Left ventricle myocardium inferior (tissue), 1 donor: ENCODE measurements at regions of chr3 and their contacts with region 1.

Region 1: DNA sequence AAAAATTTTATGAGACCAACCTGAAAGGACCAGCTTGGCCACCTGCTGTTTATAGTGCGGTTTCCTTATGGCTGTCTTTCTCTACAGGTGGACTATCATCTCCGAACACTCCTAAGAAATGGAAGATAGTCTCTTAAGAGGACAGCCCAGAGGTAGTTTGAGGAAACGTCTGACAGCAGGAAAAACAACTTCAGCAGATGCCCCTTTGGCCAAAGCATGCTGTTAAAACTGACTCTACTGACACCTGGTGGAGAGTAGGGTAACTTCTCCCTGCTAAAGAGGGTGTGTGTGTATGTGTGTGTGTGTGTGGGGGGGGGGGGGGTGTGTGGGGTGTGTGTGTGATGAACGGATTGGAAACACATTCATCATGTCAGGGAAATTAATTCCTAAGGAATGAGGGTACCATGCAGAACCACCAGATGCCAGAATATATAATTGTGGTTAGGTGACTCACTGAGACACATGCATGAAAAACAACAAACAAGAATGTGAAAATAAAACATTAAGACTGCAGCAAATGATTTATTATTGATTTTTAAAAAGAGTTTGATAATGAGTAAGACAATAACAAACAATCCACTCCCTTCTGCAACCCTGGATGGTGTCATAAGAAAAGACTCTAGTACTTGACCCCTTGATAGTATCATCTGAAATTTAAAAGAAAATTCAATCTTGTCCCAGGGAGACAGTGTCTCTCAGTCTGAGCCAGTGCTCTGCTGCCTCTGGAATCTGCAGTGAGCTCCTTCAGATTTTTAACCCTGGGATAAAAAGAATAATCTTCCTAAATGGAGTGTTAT is 256.5 kb downstream of the THRB start:
- DNase-seq: no peak
- H3K4me3 ChIP-seq: no peak overlapping the region
- H3K27ac ChIP-seq: no peak overlapping the region
- H3K4me1 ChIP-seq: peaks cover 28% of the 10 kb centered on the region
- H3K27me3 ChIP-seq: no peaks in the 10 kb centered on the region
- CTCF ChIP-seq: peak; percentile 64

Region 2: DNA sequence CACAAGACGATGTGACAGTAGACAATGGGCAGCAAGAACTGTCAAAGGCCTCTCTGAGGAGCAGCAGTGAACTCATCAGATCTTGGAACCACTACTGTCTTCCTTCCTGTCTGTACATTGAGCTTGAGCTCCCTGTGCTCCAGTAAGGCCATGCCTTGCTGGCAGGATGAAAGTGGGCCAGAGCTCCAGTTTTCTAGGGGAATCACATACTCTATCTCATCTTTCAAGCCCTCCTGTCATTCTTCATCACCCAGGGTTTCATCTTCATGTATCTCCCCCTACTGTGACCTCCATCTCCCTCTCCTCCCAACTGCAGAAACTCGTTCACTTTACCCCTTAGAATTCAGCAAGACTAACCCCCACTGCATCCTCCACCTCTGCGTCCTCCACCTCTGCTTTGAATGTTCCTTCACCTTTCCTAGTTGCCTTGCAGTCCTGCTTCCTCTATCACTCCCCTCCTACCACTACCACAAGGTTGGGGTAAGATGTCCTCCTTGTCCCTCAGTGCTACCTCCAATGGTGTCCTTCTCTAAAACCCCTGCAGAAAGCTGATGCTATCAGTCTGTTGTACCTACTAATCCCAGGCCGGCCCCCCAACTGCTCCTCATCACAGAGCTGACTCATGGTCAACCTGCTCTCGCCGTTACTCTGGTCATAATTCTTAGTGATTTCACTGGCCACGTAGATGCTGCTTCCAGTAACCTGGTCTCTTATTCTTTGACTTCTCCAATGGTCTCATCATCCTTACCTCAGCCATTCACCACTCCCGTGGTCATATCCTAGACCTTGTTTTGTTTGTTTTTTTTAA is 343.7 kb before region 1 on chr3:
- intact Hi-C with region 1: loop called (anchors 10 kb)
- DNase-seq: no peak
- H3K4me3 ChIP-seq: no peak overlapping the region
- H3K27ac ChIP-seq: no peak overlapping the region
- H3K4me1 ChIP-seq: peaks cover 8% of the 10 kb centered on the region
- H3K27me3 ChIP-seq: no peaks in the 10 kb centered on the region
- CTCF ChIP-seq: no peak

Region 3: GRCh38 chr3:24004171-24004938 is 233.8 kb before region 1 on chr3:
- intact Hi-C with region 1: loop called (anchors 5 kb)
- DNase-seq: no peak
- H3K4me3 ChIP-seq: no peak overlapping the region
- H3K27ac ChIP-seq: no peak overlapping the region
- H3K4me1 ChIP-seq: no peaks in the 10 kb centered on the region
- H3K27me3 ChIP-seq: no peaks in the 10 kb centered on the region
- CTCF ChIP-seq: no peak

Region 4: GRCh38 chr3:24196526-24196925 is 41.6 kb before region 1 on chr3:
- intact Hi-C with region 1: no loop called
- DNase-seq: no peak
- H3K4me3 ChIP-seq: no peak overlapping the region
- H3K27ac ChIP-seq: no peak overlapping the region
- H3K4me1 ChIP-seq: peaks cover 13% of the 10 kb centered on the region
- H3K27me3 ChIP-seq: no peaks in the 10 kb centered on the region
- CTCF ChIP-seq: no peak